ENCODE measurements at regions of chr10 and their contacts with region 1.

Region 1: GRCh38 chr10:103618575-103619423 is 125.3 kb downstream of the NEURL1 start:
- DNase-seq: peak in 37 of 42 donors; percentile 38 to 88 (median 67)

Region 2: DNA sequence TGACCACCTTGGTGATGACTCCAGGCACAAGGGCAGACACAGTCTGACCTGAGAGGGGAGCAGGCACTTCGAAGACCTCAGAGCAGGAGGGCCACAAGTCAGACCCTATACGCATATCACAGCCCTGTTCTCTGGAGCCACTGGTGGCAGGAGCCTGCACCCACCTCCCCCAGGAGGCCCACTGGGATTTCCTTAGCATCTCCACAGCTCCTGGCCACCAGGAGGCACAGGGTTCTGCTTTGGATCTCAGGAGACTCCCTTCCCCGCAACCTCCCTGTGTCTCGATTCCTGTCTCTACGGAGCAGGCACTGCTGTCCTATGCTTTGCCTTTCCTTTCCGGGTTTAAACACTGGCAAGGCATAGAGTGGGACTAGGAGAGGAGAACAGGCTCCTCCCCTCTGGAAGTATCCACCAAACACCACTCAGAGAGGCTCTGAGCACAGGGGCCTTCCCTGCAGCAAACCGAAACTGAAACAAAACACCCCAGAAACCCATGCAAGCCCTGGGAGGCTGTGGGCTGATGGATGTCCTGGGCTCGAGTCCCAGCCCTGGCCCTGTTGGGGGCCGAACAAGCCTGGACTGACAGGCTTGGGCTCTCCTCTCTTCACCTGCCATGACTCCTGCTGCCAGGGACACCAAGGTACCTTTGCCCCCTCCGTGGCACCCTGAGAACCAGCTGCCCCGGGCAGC is 41.0 kb after region 1 on chr10:
- intact Hi-C with region 1: loop called (anchors 10 kb)
- DNase-seq: peak in 37 of 42 donors; percentile 37 to 82 (median 56)